ENCODE measurements at regions of chr6 and their contacts with region 1.

Region 1: DNA sequence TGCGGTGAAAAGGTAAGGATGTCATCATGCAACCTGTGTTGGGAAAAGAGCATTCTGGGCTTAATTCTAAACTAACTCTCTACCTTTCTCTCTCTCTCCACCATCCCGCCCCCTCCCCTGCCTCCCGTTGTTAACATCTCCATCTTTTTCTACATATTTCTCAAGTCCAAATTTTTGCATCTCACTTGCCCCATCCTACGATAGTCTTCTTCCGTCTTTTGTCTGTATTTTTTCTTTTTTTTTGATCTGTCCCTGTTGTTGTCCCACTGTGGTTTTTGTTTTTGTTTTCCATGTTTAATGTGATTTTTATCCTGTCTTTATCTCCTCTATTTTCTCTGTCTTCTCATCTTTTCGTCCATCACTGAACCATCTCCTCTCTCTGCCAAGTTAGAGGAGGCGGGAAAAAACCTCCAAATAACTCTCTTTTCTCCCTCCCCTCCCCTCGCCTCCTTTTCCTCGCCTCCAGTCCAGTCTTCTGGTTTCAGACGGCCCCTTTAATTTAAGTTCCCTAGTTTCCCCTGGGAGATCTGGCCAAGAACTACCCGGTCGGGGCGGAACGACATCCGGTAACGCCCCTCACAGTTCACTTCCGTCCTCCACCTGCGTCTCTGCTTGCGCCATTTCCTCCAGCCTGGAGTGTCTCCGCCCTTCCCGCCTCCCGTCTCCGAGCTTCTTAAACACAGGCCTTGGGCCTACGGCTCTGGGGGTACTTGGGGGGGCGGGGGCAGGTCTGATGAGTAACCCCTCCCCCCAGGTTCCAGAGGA is at the start of gene NFKBIL1:
- DNase-seq: peak; percentile 53 to 90 (median 84)
- ATAC-seq: peak; percentile 91
- H3K4me3 ChIP-seq: peak within 1 kb of the TSS; percentile 68
- H3K4me3 Mint-ChIP-seq: peak within 1 kb of the TSS; percentile 81 to 97 (median 91)
- H3K27ac ChIP-seq: peak within 1 kb of the TSS; percentile 89
- H3K27ac Mint-ChIP-seq: peak within 1 kb of the TSS; percentile 78 to 98 (median 95)
- H3K4me1 ChIP-seq: peaks cover 22 to 31% of the 10 kb centered on the region in 2 donors
- H3K4me1 Mint-ChIP-seq: peaks cover 22 to 57% (median 48%) of the 10 kb centered on the region in 7 donors
- H3K27me3 ChIP-seq: no peaks in the 10 kb centered on the region
- H3K27me3 Mint-ChIP-seq: no peaks in the 10 kb centered on the region
- total RNA-seq, gene NFKBIL1: 8.7 to 17.2 (median 11.6) TPM

Region 2: DNA sequence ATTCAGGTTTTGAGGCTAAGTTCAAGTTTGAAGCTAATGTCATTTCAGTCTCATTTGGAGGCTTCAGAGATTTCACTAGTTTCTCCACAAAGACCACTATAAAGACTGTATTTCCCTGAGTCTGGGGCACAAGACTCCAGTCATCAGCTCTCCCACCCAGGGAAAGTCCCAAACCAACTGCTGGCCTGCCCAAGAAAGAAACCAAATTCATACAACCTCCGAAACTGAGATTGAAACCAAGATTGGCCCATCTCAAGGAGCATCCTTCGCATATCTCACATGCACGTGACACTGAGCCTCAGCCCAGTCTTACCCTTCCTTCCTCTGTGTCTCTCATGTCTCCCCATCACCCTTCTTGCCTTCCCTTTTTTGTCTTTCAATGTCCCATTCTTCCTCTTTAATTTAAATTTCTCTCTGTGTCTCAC is 21.4 kb after region 1 on chr6:
- CTCF ChIA-PET with region 1: interaction called, 298 read pairs
- POLR2A ChIA-PET with region 1: interaction called, 3,078 read pairs
- intact Hi-C with region 1: loop called (anchors 1 kb)
- DNase-seq: peak in 7 of 9 donors; percentile 58 to 84 (median 68)
- ATAC-seq: peak; percentile 82
- H3K4me3 ChIP-seq: peak overlapping the region; percentile 23
- H3K4me3 Mint-ChIP-seq: peak overlapping the region; percentile 39 to 77 (median 68)
- H3K27ac ChIP-seq: peak overlapping the region; percentile 77
- H3K27ac Mint-ChIP-seq: peak overlapping the region; percentile 84 to 99 (median 94)
- H3K4me1 ChIP-seq: peaks cover 55 to 58% of the 10 kb centered on the region in 2 donors
- H3K4me1 Mint-ChIP-seq: peaks cover 57 to 88% (median 77%) of the 10 kb centered on the region in 7 donors
- H3K27me3 ChIP-seq: no peaks in the 10 kb centered on the region
- H3K27me3 Mint-ChIP-seq: peaks cover 0 to 41% (median 0%) of the 10 kb centered on the region in 5 donors

Region 3: DNA sequence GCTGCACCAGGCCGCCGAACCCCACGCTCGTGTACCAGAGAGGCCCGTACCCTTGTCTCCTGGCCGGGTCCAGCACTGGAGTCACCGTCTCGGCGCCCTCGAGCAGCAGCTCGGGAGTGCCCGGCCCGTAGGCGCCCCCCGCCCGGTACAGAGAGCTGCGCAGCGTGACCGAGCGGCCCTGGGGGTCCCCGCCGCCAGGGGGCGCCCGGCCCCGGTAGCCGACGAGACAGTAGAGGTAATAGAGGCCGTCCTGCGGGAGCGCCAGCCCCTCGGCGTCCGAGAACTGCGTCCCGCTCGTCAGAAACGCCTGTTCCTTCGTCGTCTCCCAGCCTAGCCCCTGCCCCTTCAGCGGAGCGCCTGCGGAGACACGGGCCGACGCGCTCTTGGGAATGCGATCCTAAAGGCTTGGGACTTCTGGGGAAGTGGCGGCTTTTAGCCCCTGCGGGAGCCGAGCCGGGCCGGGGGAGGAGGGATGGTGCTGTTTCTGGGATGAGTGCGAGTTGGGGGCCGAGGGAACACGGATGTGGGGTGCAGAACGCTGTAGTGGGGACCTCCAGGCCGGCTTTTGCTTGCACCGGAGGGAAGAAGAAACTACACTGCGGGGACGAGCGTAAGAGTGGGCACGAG is 33.8 kb after region 1 on chr6:
- CTCF ChIA-PET with region 1: interaction called, 298 read pairs
- POLR2A ChIA-PET with region 1: interaction called, 3,078 read pairs
- intact Hi-C with region 1: loop called (anchors 1 kb)
- DNase-seq: peak; percentile 79 to 96 (median 88)
- ATAC-seq: peak; percentile 87
- H3K4me3 ChIP-seq: peak overlapping the region; percentile 97
- H3K4me3 Mint-ChIP-seq: peak overlapping the region; percentile 88 to 100 (median 99)
- H3K27ac ChIP-seq: peak overlapping the region; percentile 97
- H3K27ac Mint-ChIP-seq: peak overlapping the region; percentile 94 to 100 (median 97)
- H3K4me1 ChIP-seq: peaks cover 54 to 60% of the 10 kb centered on the region in 2 donors
- H3K4me1 Mint-ChIP-seq: peaks cover 47 to 80% (median 63%) of the 10 kb centered on the region in 7 donors
- H3K27me3 ChIP-seq: no peaks in the 10 kb centered on the region
- H3K27me3 Mint-ChIP-seq: no peaks in the 10 kb centered on the region

Region 4: GRCh38 chr6:31901953-31902643 is 355.0 kb after region 1 on chr6 and contains the start of gene ZBTB12:
- CTCF ChIA-PET with region 1: no interaction called
- POLR2A ChIA-PET with region 1: interaction called, 6 read pairs
- intact Hi-C with region 1: loop called in 1 of 2 experiments (anchors 2 kb)
- DNase-seq: peak; percentile 76 to 90 (median 84)
- ATAC-seq: peak; percentile 76
- H3K4me3 ChIP-seq: peak within 1 kb of the TSS; percentile 80
- H3K4me3 Mint-ChIP-seq: peak within 1 kb of the TSS; percentile 81 to 96 (median 88)
- H3K27ac ChIP-seq: peak within 1 kb of the TSS; percentile 83
- H3K27ac Mint-ChIP-seq: peak within 1 kb of the TSS; percentile 75 to 94 (median 86)
- H3K4me1 ChIP-seq: peaks cover 12 to 16% of the 10 kb centered on the region in 2 donors
- H3K4me1 Mint-ChIP-seq: peaks cover 18 to 34% (median 32%) of the 10 kb centered on the region in 7 donors
- H3K27me3 ChIP-seq: no peaks in the 10 kb centered on the region
- H3K27me3 Mint-ChIP-seq: peaks cover 0 to 11% (median 0%) of the 10 kb centered on the region in 5 donors
- total RNA-seq, gene ZBTB12: 0.77 to 4.5 (median 2.5) TPM

Measured in naive thymus-derived CD4-positive, alpha-beta T cell (primary cell).